CD4-positive, alpha-beta T cell (primary cell): ENCODE measurements at regions of chr3 and their contacts with region 1.

Region 1: GRCh38 chr3:69306239-69307185 is 79.4 kb downstream of the FRMD4B start:
- DNase-seq: peak; percentile 39 to 87 (median 60)
- ATAC-seq: peak; percentile 99
- H3K4me3 ChIP-seq: no peak overlapping the region
- H3K4me3 Mint-ChIP-seq: no peak overlapping the region
- H3K27ac ChIP-seq: no peak overlapping the region
- H3K27ac Mint-ChIP-seq: no peak overlapping the region
- H3K4me1 ChIP-seq: no peaks in the 10 kb centered on the region
- H3K4me1 Mint-ChIP-seq: peaks cover 4% of the 10 kb centered on the region
- H3K27me3 ChIP-seq: no peaks in the 10 kb centered on the region
- H3K27me3 Mint-ChIP-seq: no peaks in the 10 kb centered on the region
- CTCF ChIP-seq: peak; percentile 95

Region 2: DNA sequence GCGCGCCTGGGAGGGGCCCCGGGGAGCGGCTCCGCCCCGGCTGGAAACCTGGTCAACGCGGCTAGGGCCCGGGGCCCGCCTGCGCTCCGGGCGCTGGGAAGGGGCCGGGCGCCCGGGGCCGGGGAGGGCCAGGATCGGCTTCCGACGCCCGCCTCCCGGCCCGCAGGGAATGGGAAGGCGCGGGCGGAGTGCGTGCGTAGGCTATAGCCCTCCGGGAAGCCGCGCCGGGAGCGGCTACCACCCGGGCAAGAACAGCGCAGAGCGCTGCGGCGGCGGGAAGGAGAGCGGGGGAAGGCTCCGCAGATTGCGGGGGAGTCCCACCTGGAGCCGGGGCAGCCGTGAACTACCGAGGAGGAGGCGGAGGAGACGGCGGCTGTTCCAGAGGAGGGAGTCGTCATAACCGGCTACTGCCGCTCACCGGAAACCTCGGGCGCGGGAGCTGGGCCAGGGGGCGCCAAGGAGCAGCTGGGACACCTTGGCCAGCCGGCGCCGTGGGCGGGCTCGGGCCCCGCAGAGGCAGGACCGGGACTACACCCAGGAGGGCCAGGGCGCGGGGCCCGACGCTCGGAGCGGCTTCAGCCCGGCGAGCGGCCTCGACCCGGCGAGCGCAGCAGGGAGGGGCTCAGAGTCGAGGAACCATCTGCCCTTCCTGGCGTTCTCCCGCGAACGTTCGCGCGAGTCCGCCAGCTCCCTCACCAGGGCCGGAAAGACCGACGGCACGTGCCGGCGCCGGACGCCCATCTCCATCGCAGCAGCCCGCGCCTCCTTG is 293.1 kb before region 1 on chr3 and contains the start of gene EOGT:
- CTCF ChIA-PET with region 1: no interaction called
- POLR2A ChIA-PET with region 1: no interaction called
- intact Hi-C with region 1: loop called in 1 of 2 experiments (anchors 10 kb)
- DNase-seq: peak; percentile 60 to 90 (median 76)
- ATAC-seq: peak; percentile 78
- H3K4me3 ChIP-seq: peak within 1 kb of the TSS; percentile 77
- H3K4me3 Mint-ChIP-seq: peak within 1 kb of the TSS; percentile 94
- H3K27ac ChIP-seq: peak within 1 kb of the TSS; percentile 10 to 39
- H3K27ac Mint-ChIP-seq: peak within 1 kb of the TSS; percentile 66
- H3K4me1 ChIP-seq: peaks cover 17% of the 10 kb centered on the region
- H3K4me1 Mint-ChIP-seq: peaks cover 34% of the 10 kb centered on the region
- H3K27me3 ChIP-seq: no peaks in the 10 kb centered on the region
- H3K27me3 Mint-ChIP-seq: no peaks in the 10 kb centered on the region
- CTCF ChIP-seq: peak; percentile 69
- total RNA-seq, gene EOGT: 13.0 to 13.4 TPM

Region 3: GRCh38 chr3:69120879-69121464 is 185.5 kb before region 1 on chr3:
- CTCF ChIA-PET with region 1: interaction called, 10 read pairs
- POLR2A ChIA-PET with region 1: no interaction called
- intact Hi-C with region 1: loop called (anchors 1 kb)
- DNase-seq: peak; percentile 61 to 90 (median 79)
- ATAC-seq: peak; percentile 94
- H3K4me3 ChIP-seq: no peak overlapping the region
- H3K4me3 Mint-ChIP-seq: no peak overlapping the region
- H3K27ac ChIP-seq: no peak overlapping the region
- H3K27ac Mint-ChIP-seq: no peak overlapping the region
- H3K4me1 ChIP-seq: no peaks in the 10 kb centered on the region
- H3K4me1 Mint-ChIP-seq: peaks cover 7% of the 10 kb centered on the region
- H3K27me3 ChIP-seq: no peaks in the 10 kb centered on the region
- H3K27me3 Mint-ChIP-seq: no peaks in the 10 kb centered on the region
- CTCF ChIP-seq: peak; percentile 93

Region 4: GRCh38 chr3:69174871-69175737 is 131.4 kb before region 1 on chr3:
- CTCF ChIA-PET with region 1: interaction called, 11 read pairs
- POLR2A ChIA-PET with region 1: no interaction called
- intact Hi-C with region 1: no loop called
- DNase-seq: no peak
- ATAC-seq: no peak
- H3K4me3 ChIP-seq: no peak overlapping the region
- H3K4me3 Mint-ChIP-seq: no peak overlapping the region
- H3K27ac ChIP-seq: no peak overlapping the region
- H3K27ac Mint-ChIP-seq: no peak overlapping the region
- H3K4me1 ChIP-seq: peaks cover 11% of the 10 kb centered on the region
- H3K4me1 Mint-ChIP-seq: peaks cover 6% of the 10 kb centered on the region
- H3K27me3 ChIP-seq: no peaks in the 10 kb centered on the region
- H3K27me3 Mint-ChIP-seq: no peaks in the 10 kb centered on the region
- CTCF ChIP-seq: no peak

Region 5: DNA sequence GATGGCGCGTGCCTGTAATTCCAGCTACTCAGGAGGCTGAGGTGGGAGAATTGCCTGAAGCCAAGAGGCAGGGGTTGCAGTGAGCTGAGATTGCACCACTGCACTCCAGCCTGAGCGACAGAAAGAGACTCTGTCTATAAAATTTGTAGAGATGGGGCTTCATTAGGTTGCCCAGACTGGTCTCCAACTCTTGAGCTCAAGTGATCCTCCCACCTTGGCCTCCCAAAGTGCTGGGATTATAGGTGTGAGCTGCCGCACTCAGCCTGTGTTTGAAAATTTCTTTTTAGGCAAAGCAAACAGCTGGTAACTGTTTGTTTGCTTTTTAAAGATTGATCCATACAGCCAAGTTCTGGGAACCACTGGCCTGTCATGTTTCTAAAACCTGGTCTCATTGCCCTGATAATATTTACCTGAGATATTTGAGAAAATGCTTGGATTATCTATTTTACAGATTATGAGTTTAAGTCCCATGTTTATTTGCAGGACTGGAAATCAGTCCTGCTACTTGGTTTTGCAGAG is 119.9 kb before region 1 on chr3:
- CTCF ChIA-PET with region 1: no interaction called
- POLR2A ChIA-PET with region 1: no interaction called
- intact Hi-C with region 1: no loop called
- DNase-seq: no peak
- ATAC-seq: no peak
- H3K4me3 ChIP-seq: no peak overlapping the region
- H3K4me3 Mint-ChIP-seq: no peak overlapping the region
- H3K27ac ChIP-seq: no peak overlapping the region
- H3K27ac Mint-ChIP-seq: no peak overlapping the region
- H3K4me1 ChIP-seq: no peaks in the 10 kb centered on the region
- H3K4me1 Mint-ChIP-seq: no peaks in the 10 kb centered on the region
- H3K27me3 ChIP-seq: no peaks in the 10 kb centered on the region
- H3K27me3 Mint-ChIP-seq: no peaks in the 10 kb centered on the region
- CTCF ChIP-seq: no peak

Region 6: GRCh38 chr3:69370156-69370883 is 63.8 kb after region 1 on chr3:
- CTCF ChIA-PET with region 1: no interaction called
- POLR2A ChIA-PET with region 1: no interaction called
- intact Hi-C with region 1: no loop called
- DNase-seq: peak in 6 of 14 experiments; percentile 6 to 60 (median 33)
- ATAC-seq: peak; percentile 32
- H3K4me3 ChIP-seq: no peak overlapping the region
- H3K4me3 Mint-ChIP-seq: no peak overlapping the region
- H3K27ac ChIP-seq: no peak overlapping the region
- H3K27ac Mint-ChIP-seq: no peak overlapping the region
- H3K4me1 ChIP-seq: peaks cover 16% of the 10 kb centered on the region
- H3K4me1 Mint-ChIP-seq: peaks cover 46% of the 10 kb centered on the region
- H3K27me3 ChIP-seq: no peaks in the 10 kb centered on the region
- H3K27me3 Mint-ChIP-seq: no peaks in the 10 kb centered on the region
- CTCF ChIP-seq: no peak